ENCODE measurements at regions of chr4 and their contacts with region 1.

Region 1: DNA sequence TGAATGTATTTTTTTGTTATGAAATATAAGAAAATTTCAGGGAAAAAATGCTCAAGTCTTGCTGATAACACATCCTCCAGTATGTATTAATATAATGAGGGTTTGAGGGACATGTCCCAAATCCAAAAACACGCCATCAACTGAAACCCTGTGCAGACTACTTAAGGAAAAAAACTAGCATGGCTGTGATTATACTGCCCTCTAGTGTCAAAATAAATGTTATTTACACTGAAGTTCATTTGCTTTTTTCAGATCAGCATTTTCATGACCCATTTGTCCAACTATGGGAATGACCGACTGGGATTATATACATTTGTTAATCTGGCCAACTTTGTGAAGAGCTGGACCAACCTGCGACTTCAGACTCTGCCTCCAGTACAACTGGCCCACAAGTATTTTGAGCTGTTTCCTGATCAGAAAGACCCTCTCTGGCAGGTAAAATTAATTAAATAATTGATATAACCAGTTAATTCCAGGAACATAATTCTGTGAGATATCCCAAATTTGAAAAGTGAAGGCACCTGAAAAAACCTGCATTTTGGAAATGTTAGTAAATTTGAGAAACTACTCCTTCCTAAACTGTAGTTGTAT is 128.5 kb downstream of the PRSS12 start:
- DNase-seq: no peak
- H3K4me3 Mint-ChIP-seq: no peak overlapping the region
- H3K27ac Mint-ChIP-seq: no peak overlapping the region
- H3K4me1 Mint-ChIP-seq: no peaks in the 10 kb centered on the region
- H3K27me3 Mint-ChIP-seq: peaks cover 3% of the 10 kb centered on the region

Region 2: DNA sequence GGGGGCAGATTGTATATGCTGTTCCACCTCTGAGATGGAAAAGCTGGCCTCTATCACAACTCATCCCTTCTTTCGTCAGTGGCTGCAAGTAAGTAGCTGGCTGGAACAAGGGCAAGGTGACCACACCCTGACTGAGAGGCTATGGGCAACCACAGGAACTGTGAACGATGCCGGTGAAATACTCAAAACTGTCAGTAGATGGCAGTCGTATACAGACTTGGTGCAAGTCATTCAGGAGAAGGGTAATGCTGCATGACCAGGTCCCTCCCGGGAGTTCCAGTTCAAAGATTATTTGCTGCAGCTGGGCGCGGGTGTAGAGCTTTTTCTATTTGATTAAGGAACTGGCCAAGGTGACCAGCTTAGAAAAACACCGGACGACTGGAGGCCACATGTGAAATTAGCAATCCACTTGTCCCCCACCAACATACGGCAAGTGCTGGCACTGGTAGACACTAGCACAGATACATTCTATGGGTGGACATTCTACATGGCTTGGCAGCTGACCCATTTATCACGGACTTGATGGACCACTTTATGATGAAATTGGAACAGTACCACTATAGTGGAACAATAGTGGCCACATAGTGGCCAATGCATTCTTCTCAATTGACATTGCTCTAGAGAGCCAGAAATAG is 1865.6 kb before region 1 on chr4:
- CTCF ChIA-PET with region 1: no interaction called
- intact Hi-C with region 1: loop called (anchors 5 kb)
- DNase-seq: peak; percentile 53
- H3K4me3 Mint-ChIP-seq: no peak overlapping the region
- H3K27ac Mint-ChIP-seq: no peak overlapping the region
- H3K4me1 Mint-ChIP-seq: no peaks in the 10 kb centered on the region
- H3K27me3 Mint-ChIP-seq: no peaks in the 10 kb centered on the region

Region 3: DNA sequence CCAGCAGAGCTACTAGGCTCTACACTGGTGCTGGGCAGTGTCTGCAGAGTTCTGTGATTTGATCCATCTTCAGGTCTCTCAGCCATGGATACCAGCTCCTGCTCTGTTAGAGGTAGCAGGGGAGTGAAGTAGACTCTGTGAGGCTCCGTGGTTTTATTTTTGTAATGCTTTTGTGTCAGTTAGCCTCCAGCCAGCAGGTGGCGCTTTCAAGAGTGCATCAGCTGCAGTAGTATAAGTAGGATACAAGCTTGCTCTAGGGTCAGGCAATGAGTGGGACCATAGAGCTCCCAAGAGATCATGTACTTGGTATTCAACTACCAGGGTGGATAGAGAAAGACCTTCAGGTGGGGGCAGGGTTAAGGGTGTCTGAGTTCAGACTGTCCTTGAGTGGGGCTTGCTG is 776.4 kb before region 1 on chr4:
- CTCF ChIA-PET with region 1: no interaction called
- intact Hi-C with region 1: loop called (anchors 1 kb)
- DNase-seq: peak; percentile 31
- H3K4me3 Mint-ChIP-seq: no peak overlapping the region
- H3K27ac Mint-ChIP-seq: no peak overlapping the region
- H3K4me1 Mint-ChIP-seq: no peaks in the 10 kb centered on the region
- H3K27me3 Mint-ChIP-seq: peaks cover 2% of the 10 kb centered on the region

Region 4: DNA sequence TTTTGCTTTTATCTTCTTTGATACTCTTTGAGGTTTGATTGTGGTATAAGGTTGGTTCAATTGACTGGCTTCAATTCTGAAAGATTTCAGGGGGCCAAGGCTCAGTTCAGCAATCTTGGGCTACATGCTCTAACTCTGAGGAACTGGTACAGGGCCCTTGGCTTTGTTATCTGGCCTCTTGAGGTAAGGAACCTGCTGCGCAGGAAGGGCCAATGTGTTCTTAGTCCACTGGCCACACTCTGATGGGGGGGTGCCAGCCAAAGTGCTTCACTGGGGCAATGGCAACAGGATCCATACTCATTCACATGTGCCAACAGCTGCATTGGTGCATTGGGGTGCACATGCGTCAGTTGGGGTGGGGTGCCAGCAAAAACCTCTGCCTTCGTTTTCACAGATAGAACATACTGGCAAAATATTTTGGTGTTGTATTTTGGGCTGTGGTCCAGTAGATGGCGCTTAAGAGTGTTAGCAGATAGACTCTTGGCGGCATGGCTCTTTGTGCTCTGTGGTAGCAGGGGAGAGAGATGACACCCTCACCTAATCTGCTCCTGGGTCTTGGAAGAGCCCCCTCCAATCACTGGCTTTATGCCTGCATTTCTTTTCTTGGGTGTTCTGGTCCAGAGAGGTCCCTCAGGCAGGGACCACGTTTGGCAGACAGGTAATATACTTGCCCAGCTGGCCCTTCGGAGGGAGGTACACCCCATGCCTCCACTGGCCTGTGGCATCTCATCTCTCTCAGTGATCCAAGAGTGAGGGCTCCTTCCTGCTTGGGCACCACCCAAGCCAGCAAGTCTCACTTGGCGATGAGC is 147.2 kb before region 1 on chr4:
- CTCF ChIA-PET with region 1: interaction called, 3 read pairs
- intact Hi-C with region 1: loop called (anchors 1 kb)
- DNase-seq: peak; percentile 16
- H3K4me3 Mint-ChIP-seq: no peak overlapping the region
- H3K27ac Mint-ChIP-seq: no peak overlapping the region
- H3K4me1 Mint-ChIP-seq: no peaks in the 10 kb centered on the region
- H3K27me3 Mint-ChIP-seq: peaks cover 7% of the 10 kb centered on the region

Measured in activated naive CD4-positive, alpha-beta T cell treated with anti-CD3 and anti-CD28 coated beads for 36 hours (primary cell).